ENCODE measurements at regions of chr17 and their contacts with region 1.

Region 1: GRCh38 chr17:39153599-39154051 is 2.2 kb upstream of the PLXDC1 start:
- DNase-seq: peak; percentile 92
- ATAC-seq: peak; percentile 22
- H3K4me3 Mint-ChIP-seq: peak overlapping the region; percentile 100
- H3K27ac Mint-ChIP-seq: peak overlapping the region; percentile 13
- H3K4me1 Mint-ChIP-seq: peaks cover 21% of the 10 kb centered on the region
- H3K27me3 Mint-ChIP-seq: peaks cover 43% of the 10 kb centered on the region
- CTCF ChIP-seq: no peak

Region 2: GRCh38 chr17:38922538-38923297 is 230.9 kb before region 1 on chr17:
- CTCF ChIA-PET with region 1: interaction called, 12 read pairs
- POLR2A ChIA-PET with region 1: interaction called, 5 read pairs
- DNase-seq: peak; percentile 53
- ATAC-seq: peak; percentile 55
- H3K4me3 Mint-ChIP-seq: no peak overlapping the region
- H3K27ac Mint-ChIP-seq: peak overlapping the region; percentile 45; the same call in 1 of the 2 replicates
- H3K4me1 Mint-ChIP-seq: peaks cover 38% of the 10 kb centered on the region
- H3K27me3 Mint-ChIP-seq: no peaks in the 10 kb centered on the region; the same call in 1 of the 2 replicates
- CTCF ChIP-seq: no peak

Region 3: DNA sequence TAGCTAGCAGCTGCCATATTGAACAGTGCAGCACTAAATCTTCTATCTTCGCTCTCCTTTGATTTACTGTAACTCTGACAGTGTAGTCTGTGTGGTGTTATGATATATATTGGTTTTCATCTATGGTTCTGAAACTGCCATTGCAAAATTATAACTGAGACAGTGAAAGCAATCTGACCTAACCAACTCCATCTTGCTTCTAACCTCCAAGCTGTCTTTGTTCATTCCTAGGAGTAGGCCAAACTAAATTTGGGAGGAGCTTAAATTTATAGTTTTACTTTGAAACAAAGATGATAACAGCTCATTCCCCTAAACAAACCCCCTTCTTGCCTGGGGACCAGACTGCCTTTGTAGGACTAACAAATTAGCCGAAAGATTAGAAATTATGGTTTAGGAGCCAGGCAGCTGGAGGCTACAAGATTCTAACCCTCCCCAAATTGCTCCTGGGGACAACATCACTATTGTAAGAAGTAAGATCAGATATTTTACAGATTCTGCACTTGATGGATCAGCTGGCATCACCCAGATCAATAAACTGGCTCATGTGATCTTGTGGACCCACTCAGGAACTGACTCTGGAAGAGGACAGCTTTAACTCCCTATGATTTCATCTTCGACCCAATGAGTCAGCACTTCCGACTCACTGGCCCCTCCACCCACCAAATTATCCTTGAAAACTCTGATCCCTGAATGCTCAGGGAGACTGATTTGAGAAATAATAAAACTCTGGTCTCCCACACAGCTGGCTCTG is 139.4 kb before region 1 on chr17:
- CTCF ChIA-PET with region 1: interaction called, 14 read pairs
- POLR2A ChIA-PET with region 1: interaction called, 4 read pairs
- DNase-seq: no peak
- ATAC-seq: no peak
- H3K4me3 Mint-ChIP-seq: no peak overlapping the region
- H3K27ac Mint-ChIP-seq: no peak overlapping the region; the same call in 1 of the 2 replicates
- H3K4me1 Mint-ChIP-seq: peaks cover 35% of the 10 kb centered on the region
- H3K27me3 Mint-ChIP-seq: no peaks in the 10 kb centered on the region; the same call in 1 of the 2 replicates
- CTCF ChIP-seq: no peak

Region 4: GRCh38 chr17:39045948-39046679 is 107.5 kb before region 1 on chr17:
- CTCF ChIA-PET with region 1: interaction called, 12 read pairs
- POLR2A ChIA-PET with region 1: no interaction called
- DNase-seq: peak; percentile 56
- ATAC-seq: peak; percentile 83
- H3K4me3 Mint-ChIP-seq: no peak overlapping the region
- H3K27ac Mint-ChIP-seq: peak overlapping the region; percentile 96
- H3K4me1 Mint-ChIP-seq: 0 out of 2 replicates have a peak, but pooled peaks cover 4% of the 10 kb centered on the region
- H3K27me3 Mint-ChIP-seq: peaks cover 8% of the 10 kb centered on the region
- CTCF ChIP-seq: no peak

Region 5: DNA sequence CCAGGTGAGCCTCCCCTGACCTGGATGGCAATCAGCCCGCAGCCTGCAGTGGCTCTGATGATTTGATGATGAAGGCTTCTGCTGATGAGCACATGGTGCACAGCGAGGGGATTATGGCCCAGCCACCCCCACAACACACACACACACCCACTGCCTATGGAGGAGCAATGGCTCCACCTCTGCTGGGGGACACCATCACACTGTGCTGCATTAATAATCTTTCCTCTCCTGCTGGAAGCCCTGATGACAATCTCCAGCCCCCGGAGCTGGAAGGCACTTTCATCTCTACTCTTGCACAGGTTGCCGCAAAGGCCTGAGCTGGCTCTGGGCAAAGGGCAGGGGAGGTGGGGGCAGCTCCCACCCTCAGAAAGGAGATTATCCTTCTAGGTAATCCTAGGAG is 82.1 kb before region 1 on chr17:
- CTCF ChIA-PET with region 1: interaction called, 15 read pairs
- POLR2A ChIA-PET with region 1: interaction called, 3 read pairs
- DNase-seq: no peak
- ATAC-seq: no peak
- H3K4me3 Mint-ChIP-seq: no peak overlapping the region
- H3K27ac Mint-ChIP-seq: no peak overlapping the region
- H3K4me1 Mint-ChIP-seq: peaks cover 8% of the 10 kb centered on the region
- H3K27me3 Mint-ChIP-seq: no peaks in the 10 kb centered on the region
- CTCF ChIP-seq: no peak

Measured in WTC11 (cell line).